Activated CD4-positive, alpha-beta T cell treated with anti-CD3 and anti-CD28 coated beads, Interleukin-2, amount 10 ng/mL, durations not matched to agents 7 days and 5 days (primary cell): ENCODE measurements at regions of chr11 and their contacts with region 1.

Region 1: DNA sequence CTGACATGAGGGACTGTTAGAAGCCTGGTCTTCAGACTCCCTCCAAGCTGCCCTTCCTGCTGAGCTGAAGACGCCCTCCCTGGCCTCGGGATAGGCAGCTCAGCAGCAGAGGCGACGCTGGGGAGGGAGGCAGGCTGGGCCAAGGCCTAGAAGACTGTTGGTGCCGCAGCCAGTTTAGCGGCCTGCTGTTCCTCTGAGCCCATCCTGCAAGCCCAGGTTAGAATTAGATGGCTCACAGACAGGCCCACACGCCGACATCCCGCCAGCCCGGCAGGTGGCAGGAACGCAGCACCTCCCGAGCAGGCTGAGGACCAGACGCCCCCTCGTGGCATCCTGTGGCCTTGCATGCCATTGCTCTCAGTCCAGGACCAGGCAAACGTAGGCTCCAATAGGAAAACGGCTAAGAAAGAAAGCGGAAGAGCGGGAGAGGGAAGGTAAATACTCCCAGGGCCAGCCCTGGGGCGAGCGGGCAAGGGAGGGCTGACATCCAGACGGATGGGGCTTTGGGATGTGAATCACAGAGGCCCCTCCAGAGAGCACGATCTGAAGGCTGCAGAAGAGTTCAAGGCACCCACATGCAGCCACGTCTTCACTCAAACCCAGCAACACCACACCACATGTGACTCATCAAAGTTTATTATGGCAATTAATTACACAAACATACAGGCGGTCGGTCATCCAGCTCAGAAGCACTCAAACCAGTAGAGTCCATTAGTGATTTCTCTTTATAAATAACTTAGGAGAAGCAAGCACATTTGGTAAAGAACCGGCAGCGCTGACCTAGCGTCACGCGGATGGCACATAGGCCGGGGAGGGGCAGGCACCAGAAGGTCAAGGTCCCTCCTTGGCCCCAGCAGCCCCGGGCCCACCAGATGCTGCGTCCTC is 27.6 kb downstream of the CD5 start:
- DNase-seq: peak; percentile 92
- H3K4me3 Mint-ChIP-seq: no peak overlapping the region
- H3K27ac Mint-ChIP-seq: peak overlapping the region; percentile 19
- H3K4me1 Mint-ChIP-seq: peaks cover 31% of the 10 kb centered on the region
- H3K27me3 Mint-ChIP-seq: no peaks in the 10 kb centered on the region

Region 2: DNA sequence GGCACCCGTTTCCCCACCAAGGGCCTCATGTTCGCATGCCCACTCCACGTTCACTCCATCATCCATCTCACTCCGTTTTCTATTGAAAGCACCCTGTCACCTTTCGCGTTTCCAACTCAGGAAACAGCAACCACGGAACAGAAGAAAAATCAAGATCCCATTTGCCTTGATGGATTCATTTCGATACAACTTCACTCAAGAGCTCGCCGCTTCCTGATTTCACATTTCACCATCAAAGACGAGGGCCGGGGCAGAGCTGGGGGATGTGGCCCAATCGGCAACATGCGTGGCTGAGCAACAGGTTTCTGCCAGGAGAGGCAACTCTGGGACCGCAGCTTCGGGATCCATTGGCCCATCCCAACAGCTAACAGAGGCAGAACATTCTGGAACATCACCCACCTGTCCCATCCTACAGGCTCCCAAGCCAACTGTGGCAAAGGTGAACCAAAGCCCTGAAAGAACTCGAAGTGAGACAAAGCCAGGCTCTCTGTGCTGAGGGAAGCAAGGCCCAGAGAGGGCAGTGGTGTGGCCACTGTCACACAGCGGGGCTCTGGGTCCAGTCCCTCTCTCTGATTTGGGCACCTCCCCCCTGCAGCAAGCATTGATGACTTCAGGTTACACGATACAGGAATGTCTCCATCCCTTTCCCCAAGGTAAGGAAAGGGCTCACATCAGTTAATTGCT is 63.8 kb before region 1 on chr11:
- CTCF ChIA-PET with region 1: interaction called, 11 read pairs
- POLR2A ChIA-PET with region 1: no interaction called
- DNase-seq: peak; percentile 67
- H3K4me3 Mint-ChIP-seq: peak overlapping the region; percentile 64
- H3K27ac Mint-ChIP-seq: peak overlapping the region; percentile 93
- H3K4me1 Mint-ChIP-seq: peaks cover 94% of the 10 kb centered on the region
- H3K27me3 Mint-ChIP-seq: no peaks in the 10 kb centered on the region

Region 3: GRCh38 chr11:61111786-61112517 is 17.9 kb before region 1 on chr11:
- CTCF ChIA-PET with region 1: interaction called, 25 read pairs
- POLR2A ChIA-PET with region 1: no interaction called
- DNase-seq: peak; percentile 84
- H3K4me3 Mint-ChIP-seq: peak overlapping the region; percentile 73
- H3K27ac Mint-ChIP-seq: peak overlapping the region; percentile 91
- H3K4me1 Mint-ChIP-seq: peaks cover 98% of the 10 kb centered on the region
- H3K27me3 Mint-ChIP-seq: no peaks in the 10 kb centered on the region

Region 4: GRCh38 chr11:61254403-61255025 is 124.6 kb after region 1 on chr11:
- CTCF ChIA-PET with region 1: no interaction called
- POLR2A ChIA-PET with region 1: no interaction called
- DNase-seq: peak; percentile 73
- H3K4me3 Mint-ChIP-seq: no peak overlapping the region
- H3K27ac Mint-ChIP-seq: no peak overlapping the region
- H3K4me1 Mint-ChIP-seq: peaks cover 3% of the 10 kb centered on the region
- H3K27me3 Mint-ChIP-seq: no peaks in the 10 kb centered on the region